ENCODE measurements at regions of chr11 and their contacts with region 1.

Region 1: DNA sequence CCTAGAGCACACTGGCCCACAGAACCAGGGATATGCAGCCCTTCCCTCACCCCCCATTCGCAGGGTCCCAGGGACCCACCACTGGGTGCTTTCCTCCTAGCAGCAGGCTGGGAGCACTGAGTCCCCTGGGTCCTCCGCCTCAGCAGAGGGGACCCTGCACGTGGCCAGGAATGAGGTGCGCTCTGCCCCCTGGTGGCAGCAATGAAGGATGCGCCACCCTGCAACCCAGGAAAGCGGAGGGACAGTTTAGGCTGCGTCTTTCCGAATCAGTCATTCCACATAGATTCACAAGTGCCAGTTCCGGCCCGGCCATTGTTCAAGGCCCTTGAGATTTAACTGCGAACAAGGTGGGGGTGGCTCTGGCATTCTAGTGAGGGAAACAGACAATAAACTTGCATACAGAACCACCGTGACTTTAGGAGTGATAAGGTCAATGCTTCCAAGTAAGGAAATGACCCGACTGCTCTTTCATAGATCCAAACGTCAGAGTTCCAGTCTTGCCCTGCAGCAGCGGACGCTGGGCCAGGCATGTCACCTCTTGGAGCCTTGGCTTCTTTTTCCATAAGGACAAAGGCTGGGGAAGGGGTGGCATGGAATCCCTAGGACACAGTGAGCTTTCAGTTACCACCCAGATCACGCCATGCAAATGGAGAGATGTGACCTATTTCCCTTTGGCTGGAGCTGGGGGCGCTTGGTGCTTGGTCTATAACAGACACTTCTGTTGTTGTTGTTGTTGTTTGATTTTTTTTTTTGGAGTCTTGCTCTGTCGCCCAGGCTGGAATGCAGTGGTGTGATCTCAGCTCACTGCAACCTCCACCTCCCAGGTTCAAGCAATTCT is 7.7 kb downstream of the RIN1 start:
- DNase-seq: peak; percentile 63 to 87 (median 78)
- H3K4me3 ChIP-seq: no peak overlapping the region
- H3K27ac ChIP-seq: no peak overlapping the region
- H3K4me1 ChIP-seq: peaks cover 14% of the 10 kb centered on the region
- H3K27me3 ChIP-seq: no peaks in the 10 kb centered on the region
- CTCF ChIP-seq: peak; percentile 86 to 96 (median 95)
- EP300 ChIP-seq: no peak
- POLR2A ChIP-seq: no peak

Region 2: DNA sequence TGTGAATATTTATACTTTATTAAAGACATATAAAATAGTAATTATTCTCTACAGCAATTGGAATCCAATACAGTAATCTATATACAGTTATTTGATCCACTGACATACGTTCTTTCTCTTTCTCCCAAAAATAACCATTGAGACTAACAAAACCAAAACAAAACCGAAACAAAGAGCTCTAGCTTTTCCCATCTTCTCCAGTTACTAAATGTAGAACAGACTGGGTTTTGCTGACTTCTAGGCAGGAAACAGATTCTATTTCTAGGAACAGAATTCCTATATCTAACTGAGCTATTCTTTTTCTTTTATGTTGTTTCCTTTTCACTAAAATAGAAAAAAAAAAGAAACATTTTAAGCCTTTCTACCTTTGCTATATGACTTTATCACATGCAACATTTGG is 178.4 kb before region 1 on chr11:
- intact Hi-C with region 1: no loop called
- DNase-seq: no peak
- H3K4me3 ChIP-seq: no peak overlapping the region
- H3K27ac ChIP-seq: no peak overlapping the region
- H3K4me1 ChIP-seq: no peaks in the 10 kb centered on the region
- H3K27me3 ChIP-seq: no peaks in the 10 kb centered on the region
- CTCF ChIP-seq: no peak
- EP300 ChIP-seq: no peak
- POLR2A ChIP-seq: no peak

Region 3: DNA sequence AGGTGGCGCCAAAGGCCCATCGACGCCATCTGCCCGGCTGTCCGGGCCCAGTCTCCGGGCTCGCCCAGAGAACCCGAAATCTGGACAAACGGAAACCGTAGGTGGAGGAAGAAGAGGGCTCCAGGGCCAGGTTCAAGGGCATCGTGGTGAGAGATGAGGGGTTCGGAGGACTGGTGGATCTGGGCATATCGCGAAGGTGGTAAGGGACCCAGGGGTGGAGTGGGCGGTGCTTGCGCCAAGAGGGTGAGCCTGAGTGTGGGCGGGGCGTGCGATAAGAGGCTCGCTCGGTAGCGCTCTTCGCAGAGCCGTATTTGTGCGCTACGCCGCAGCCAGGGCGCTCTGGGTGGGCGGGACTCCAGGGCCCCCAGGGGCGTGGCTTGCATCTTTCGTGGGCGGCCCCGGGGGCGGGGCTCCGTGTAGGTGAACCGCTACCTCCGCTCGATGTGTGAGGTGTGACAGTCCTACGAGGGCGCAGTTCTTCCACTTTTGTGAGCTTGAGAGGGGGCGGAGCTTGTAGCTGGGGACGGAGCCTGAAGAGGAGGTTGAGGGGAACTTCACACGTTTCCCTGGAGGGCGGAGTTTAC is 16.5 kb before region 1 on chr11:
- intact Hi-C with region 1: loop called in 3 of 4 experiments (anchors 1 kb)
- DNase-seq: peak; percentile 93 to 97 (median 95)
- H3K4me3 ChIP-seq: peak overlapping the region; percentile 54
- H3K27ac ChIP-seq: peak overlapping the region; percentile 78 to 92
- H3K4me1 ChIP-seq: peaks cover 21% of the 10 kb centered on the region
- H3K27me3 ChIP-seq: no peaks in the 10 kb centered on the region
- CTCF ChIP-seq: peak; percentile 84 to 99 (median 97)
- EP300 ChIP-seq: no peak
- POLR2A ChIP-seq: peak; percentile 18

Measured in ovary (tissue), 10 donors.